SK-N-SH (cell line): ENCODE measurements at regions of chr9 and their contacts with region 1.

Region 1: DNA sequence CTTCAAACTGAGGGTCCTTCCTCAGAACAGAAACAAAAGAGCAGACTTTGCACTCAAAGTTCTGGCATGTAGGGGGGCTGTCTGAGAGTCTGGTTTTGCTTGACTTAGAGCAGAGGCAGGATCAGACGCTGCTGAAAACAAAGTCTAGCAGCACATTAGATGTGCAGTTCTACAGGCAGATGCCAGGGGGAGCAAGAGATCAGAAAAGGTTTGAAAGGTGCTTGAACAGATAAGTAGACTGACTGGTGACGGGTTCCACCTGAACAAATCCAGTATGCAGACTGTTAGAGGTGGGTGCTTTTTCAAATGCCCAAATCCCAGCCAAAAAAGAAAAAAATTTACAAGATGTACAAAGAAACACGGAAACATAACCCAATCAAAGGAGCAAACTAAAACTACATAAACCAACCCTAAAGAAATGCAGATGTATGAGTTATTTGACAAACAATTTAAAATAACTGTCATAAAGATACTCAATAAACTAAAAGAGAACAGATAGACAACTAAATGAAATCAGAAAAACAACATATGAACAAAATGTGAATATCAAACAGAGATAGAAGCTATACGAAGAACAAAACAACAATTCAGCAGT is 194.7 kb upstream of the FREM1 start:
- DNase-seq: peak; percentile 37
- H3K4me3 ChIP-seq: no peak overlapping the region
- H3K27ac ChIP-seq: no peak overlapping the region
- H3K4me1 ChIP-seq: no peaks in the 10 kb centered on the region
- H3K27me3 ChIP-seq: no peaks in the 10 kb centered on the region
- CTCF ChIP-seq: peak; percentile 78
- EP300 ChIP-seq: no peak
- RAD21 ChIP-seq: peak; percentile 69

Region 2: DNA sequence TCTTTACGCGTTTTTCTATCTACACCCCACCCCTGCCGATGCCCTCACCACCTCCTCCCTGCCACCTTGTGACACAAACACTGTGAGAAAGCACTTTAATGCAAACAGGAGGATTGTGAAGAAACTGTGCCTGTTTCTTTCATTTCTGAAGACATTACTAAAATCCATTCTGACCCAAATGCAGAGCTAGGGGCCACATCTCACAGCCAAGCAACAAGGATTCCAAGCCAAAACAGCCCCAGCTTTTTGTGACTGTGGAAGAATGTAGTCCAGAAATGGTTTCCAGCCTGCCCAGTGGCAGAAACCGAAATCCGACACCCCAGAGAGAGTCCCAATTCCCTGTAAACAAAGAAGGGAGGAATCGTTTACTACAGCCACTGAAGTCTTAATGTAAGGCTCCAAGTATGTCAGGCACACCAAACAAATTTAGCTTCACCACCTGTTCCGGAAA is 11.2 kb after region 1 on chr9:
- CTCF ChIA-PET with region 1: interaction called, 13 read pairs
- POLR2A ChIA-PET with region 1: no interaction called
- DNase-seq: no peak
- H3K4me3 ChIP-seq: no peak overlapping the region
- H3K27ac ChIP-seq: no peak overlapping the region
- H3K4me1 ChIP-seq: no peaks in the 10 kb centered on the region
- H3K27me3 ChIP-seq: no peaks in the 10 kb centered on the region
- CTCF ChIP-seq: no peak
- EP300 ChIP-seq: no peak
- RAD21 ChIP-seq: no peak

Region 3: DNA sequence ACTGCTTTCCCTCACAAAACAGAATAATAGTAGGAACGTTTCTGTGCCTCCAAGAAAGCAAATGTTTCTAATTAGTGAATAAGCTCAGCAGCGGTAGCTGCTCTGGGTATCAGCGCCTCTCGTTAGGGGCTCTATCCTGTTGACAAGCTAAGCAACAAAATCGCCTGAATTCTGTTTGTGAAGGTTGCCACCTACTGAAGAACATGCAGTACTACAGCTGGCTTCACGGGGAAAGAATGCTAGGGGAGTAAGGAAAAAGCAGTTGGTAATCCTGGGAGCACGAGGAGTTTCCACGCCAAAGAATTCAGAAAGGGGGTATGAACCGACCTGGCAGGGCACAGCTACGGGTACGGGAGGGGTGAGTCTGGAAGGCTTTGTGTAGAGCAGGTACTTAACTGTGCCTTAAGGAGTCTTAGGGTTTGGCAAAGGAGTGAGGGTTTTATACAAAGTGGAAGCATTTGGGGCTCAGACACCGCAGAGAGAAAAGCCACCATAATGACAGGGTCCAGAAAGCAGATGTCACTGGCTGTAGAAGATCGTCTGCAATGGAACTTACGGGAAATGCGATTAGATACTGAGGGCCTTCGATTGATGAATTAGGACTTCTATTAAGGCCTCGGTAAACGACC is 30.4 kb after region 1 on chr9:
- CTCF ChIA-PET with region 1: interaction called, 37 read pairs
- POLR2A ChIA-PET with region 1: no interaction called
- DNase-seq: peak; percentile 82
- H3K4me3 ChIP-seq: peak overlapping the region; percentile 28 to 50; a peak in 3 of 4 replicates
- H3K27ac ChIP-seq: peak overlapping the region in 1 of 2 experiments; percentile 23; a peak in 1 of 4 replicates
- H3K4me1 ChIP-seq: peaks cover 0 to 3% of the 10 kb centered on the region in 2 experiments; a peak in 1 of 4 replicates
- H3K27me3 ChIP-seq: no peaks in the 10 kb centered on the region
- CTCF ChIP-seq: peak; percentile 81
- EP300 ChIP-seq: peak in 1 of 2 experiments; percentile 10; a peak in 1 of 4 replicates
- RAD21 ChIP-seq: peak; percentile 96

Region 4: DNA sequence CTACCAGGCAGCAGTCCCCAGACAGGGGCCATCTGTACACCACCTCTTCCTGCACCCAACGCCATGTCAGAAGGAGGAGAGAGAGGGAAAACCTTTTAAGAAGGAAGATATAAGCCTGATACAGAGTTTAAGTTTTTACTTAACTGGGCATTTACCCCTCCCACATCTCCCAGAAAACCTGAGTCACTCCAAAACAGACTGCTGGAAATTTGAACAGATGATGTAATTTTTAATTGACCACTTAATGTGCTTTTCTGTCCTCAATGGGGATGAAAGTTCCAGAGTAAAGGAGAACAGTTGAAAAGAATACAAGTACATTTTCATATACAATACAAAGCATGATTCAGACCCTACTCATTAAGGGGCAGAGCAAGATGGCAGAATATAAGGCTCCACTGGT is 138.2 kb after region 1 on chr9:
- CTCF ChIA-PET with region 1: no interaction called
- POLR2A ChIA-PET with region 1: no interaction called
- DNase-seq: no peak
- H3K4me3 ChIP-seq: no peak overlapping the region
- H3K27ac ChIP-seq: no peak overlapping the region; a peak in 1 of 4 replicates
- H3K4me1 ChIP-seq: peaks cover 2 to 3% of the 10 kb centered on the region in 2 experiments; a peak in 1 of 4 replicates
- H3K27me3 ChIP-seq: no peaks in the 10 kb centered on the region
- CTCF ChIP-seq: no peak
- EP300 ChIP-seq: no peak
- RAD21 ChIP-seq: no peak